ENCODE measurements at regions of chr2 and their contacts with region 1.

Region 1: DNA sequence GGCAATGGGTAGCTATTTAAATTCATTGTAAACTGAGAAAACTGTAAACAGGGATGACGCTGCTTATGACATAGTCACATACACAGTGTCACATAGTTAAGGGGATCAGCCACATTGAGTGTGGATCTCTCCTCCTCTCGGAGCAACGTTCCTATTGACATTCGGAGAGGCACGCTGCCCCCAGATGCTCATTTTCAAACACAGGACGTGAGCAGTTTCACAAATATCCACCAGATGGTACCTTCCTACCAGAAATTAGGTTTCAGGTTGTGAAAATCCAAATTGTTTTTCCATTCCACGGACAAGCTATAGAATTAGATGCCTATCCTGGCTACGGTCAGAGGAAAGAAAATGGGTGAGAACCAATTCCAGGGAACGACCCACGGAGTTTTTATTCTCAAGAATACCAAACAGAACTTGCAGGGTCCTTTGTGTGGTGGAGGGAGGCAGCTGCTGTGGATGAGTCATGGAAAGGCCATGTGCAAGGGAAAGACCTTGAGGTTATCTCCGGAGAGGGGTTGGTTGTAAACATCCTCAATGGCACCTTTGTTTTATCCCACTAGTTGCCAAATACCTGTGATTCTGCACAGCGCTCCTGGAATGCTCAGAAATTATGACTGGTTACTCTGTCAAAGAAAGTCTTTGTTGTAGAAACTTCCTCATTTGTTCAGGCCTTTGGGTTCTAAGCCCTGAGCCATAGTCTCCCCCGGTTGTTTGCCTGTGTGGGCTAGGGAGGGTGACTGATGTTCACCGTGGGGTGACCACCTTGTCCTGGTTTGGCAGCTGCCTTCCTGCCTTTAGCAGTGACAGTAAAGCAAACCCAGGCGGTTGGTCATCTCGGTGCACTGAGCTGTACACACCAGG is 88.0 kb downstream of the ACTR3 start:
- DNase-seq: no peak
- ATAC-seq: peak in 1 of 2 donors; percentile 17
- H3K4me3 ChIP-seq: no peak overlapping the region
- H3K27ac ChIP-seq: no peak overlapping the region
- H3K4me1 ChIP-seq: no peaks in the 10 kb centered on the region
- H3K27me3 ChIP-seq: no peaks in the 10 kb centered on the region

Region 2: GRCh38 chr2:113750385-113750784 is 227.5 kb before region 1 on chr2:
- intact Hi-C with region 1: no loop called
- DNase-seq: no peak
- ATAC-seq: no peak
- H3K4me3 ChIP-seq: no peak overlapping the region
- H3K27ac ChIP-seq: no peak overlapping the region
- H3K4me1 ChIP-seq: no peaks in the 10 kb centered on the region
- H3K27me3 ChIP-seq: no peaks in the 10 kb centered on the region

Region 3: DNA sequence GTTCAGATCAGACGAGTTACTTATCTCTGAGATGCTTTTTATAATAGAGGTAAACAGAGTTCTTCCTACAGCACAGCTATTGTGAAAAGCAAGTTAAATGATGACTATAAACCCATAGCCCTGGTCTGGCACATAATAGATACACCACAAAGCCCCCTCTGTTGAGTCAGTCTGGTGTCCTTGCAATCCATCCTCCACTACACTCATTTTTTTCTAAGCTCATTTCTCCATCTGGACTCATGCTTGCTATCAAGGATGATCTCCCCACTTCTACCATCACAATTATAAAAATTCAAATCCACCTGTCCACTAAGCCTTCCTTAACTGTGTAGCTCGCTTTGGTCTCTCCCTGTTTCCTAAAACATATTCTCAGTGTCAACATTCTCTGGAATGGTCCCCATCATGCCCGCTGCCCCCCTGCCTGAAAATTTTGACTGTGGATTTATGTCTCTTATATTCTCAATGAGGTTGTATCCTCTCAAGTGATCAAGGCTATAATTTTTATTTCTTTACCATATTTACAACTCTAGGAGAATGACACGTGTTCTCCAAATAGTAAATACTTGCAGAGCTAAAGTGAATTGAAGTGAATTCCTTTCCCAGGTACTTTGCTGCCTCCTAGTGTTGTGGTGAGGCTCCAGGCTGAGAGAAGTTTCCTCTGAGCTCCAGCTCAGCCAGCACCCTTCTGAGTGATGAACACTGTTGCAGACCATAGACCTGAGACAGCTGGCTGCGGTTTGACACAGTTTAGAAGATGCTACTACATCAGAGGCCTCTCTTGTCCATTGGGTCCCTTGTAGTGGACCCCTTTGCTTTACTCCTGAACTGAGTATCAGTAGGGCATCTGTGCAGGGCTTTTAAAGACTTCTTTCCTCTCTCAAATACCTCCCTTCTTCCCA is 573.3 kb after region 1 on chr2:
- intact Hi-C with region 1: loop called in 3 of 4 experiments (anchors 5 to 10 kb)
- DNase-seq: peak; percentile 34 to 63 (median 54)
- ATAC-seq: peak; percentile 70 to 72
- H3K4me3 ChIP-seq: no peak overlapping the region
- H3K27ac ChIP-seq: no peak overlapping the region
- H3K4me1 ChIP-seq: no peaks in the 10 kb centered on the region
- H3K27me3 ChIP-seq: no peaks in the 10 kb centered on the region

Measured in right cardiac atrium (tissue), 5 donors.